ENCODE measurements at regions of chr6 and their contacts with region 1.

Region 1: GRCh38 chr6:37819177-37819823 is at the start of gene ZFAND3:
- DNase-seq: peak; percentile 99
- ATAC-seq: peak; percentile 79
- H3K4me3 ChIP-seq: peak within 1 kb of the TSS; percentile 72 to 100 (median 89)
- H3K4me3 Mint-ChIP-seq: peak within 1 kb of the TSS; percentile 92
- H3K27ac ChIP-seq: peak within 1 kb of the TSS; percentile 90 to 96
- H3K27ac Mint-ChIP-seq: peak within 1 kb of the TSS; percentile 98
- H3K4me1 ChIP-seq: peaks cover 18 to 26% of the 10 kb centered on the region in 2 donors
- H3K4me1 Mint-ChIP-seq: peaks cover 43% of the 10 kb centered on the region
- H3K27me3 ChIP-seq: no peaks in the 10 kb centered on the region
- H3K27me3 Mint-ChIP-seq: no peaks in the 10 kb centered on the region
- CTCF ChIP-seq: no peak
- total RNA-seq, gene ZFAND3: 58.3 and 64.8 TPM in 2 replicates

Region 2: DNA sequence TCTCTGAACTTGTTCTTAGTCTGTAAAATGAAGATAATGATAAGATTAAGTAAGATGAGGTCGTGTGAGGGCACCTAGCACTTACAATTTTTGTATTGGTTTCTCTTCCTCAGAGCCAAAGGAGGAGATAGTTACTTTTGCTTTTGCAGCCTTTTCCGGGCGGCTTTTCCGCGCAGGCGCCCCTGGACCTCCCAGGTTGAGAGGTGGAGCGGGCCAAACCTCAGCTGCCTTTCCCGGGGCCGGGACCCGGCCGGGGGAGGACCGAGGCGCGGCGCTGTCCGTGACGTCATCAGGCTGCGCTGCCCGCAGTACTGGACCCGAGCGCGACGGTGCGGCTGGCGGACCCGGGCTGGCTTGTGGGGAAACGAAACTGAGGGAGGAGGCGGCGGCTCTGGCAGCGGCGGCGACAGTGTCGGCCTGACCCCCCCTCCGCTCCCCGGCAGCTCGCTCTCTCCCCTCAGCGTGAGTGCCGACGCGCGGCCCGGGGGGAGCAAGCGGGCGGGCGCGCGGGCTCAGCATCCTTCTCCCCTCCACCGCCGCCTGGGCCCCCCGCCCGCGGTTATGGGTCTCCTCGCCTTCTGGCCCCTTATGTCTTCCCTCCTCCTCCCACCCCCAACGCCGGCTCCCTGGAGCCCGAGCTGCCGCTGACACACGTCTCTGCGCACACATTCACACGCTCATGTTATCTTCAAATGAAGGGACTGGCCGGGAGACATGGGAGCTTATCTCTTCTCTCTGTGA is 386.2 kb before region 1 on chr6 and contains the start of gene CMTR1:
- CTCF ChIA-PET with region 1: no interaction called
- POLR2A ChIA-PET with region 1: no interaction called
- intact Hi-C with region 1: loop called (anchors 1 kb)
- DNase-seq: peak; percentile 98
- ATAC-seq: peak; percentile 88
- H3K4me3 ChIP-seq: peak within 1 kb of the TSS; percentile 88 to 97 (median 94)
- H3K4me3 Mint-ChIP-seq: peak within 1 kb of the TSS; percentile 96
- H3K27ac ChIP-seq: peak within 1 kb of the TSS; percentile 92 to 94
- H3K27ac Mint-ChIP-seq: peak within 1 kb of the TSS; percentile 96
- H3K4me1 ChIP-seq: peaks cover 17 to 26% of the 10 kb centered on the region in 2 donors
- H3K4me1 Mint-ChIP-seq: peaks cover 40% of the 10 kb centered on the region
- H3K27me3 ChIP-seq: no peaks in the 10 kb centered on the region
- H3K27me3 Mint-ChIP-seq: peaks cover under 1% of the 10 kb centered on the region
- CTCF ChIP-seq: no peak
- total RNA-seq, gene CMTR1: 81.3 and 82.9 TPM in 2 replicates

Region 3: GRCh38 chr6:37705239-37706051 is 113.9 kb before region 1 on chr6:
- CTCF ChIA-PET with region 1: interaction called, 3 read pairs
- POLR2A ChIA-PET with region 1: no interaction called
- intact Hi-C with region 1: loop called (anchors 2 kb)
- DNase-seq: peak; percentile 87
- ATAC-seq: peak; percentile 88
- H3K4me3 ChIP-seq: peak overlapping the region; percentile 3 to 69 (median 53)
- H3K4me3 Mint-ChIP-seq: peak overlapping the region; percentile 91
- H3K27ac ChIP-seq: peak overlapping the region; percentile 39 to 65
- H3K27ac Mint-ChIP-seq: peak overlapping the region; percentile 86
- H3K4me1 ChIP-seq: peaks cover 5 to 22% of the 10 kb centered on the region in 2 donors
- H3K4me1 Mint-ChIP-seq: peaks cover 26% of the 10 kb centered on the region
- H3K27me3 ChIP-seq: peaks cover 0 to 4% (median 0%) of the 10 kb centered on the region in 4 experiments
- H3K27me3 Mint-ChIP-seq: no peaks in the 10 kb centered on the region
- CTCF ChIP-seq: peak; percentile 83

Region 4: GRCh38 chr6:37868447-37868825 is 49.1 kb after region 1 on chr6:
- CTCF ChIA-PET with region 1: no interaction called
- POLR2A ChIA-PET with region 1: interaction called, 12 read pairs
- intact Hi-C with region 1: no loop called
- DNase-seq: no peak
- ATAC-seq: no peak
- H3K4me3 ChIP-seq: peak overlapping the region in 1 of 5 experiments; percentile 47
- H3K4me3 Mint-ChIP-seq: peak overlapping the region; percentile 65
- H3K27ac ChIP-seq: peak overlapping the region in 1 of 2 donors; percentile 61
- H3K27ac Mint-ChIP-seq: peak overlapping the region; percentile 60
- H3K4me1 ChIP-seq: peaks cover 22 to 34% of the 10 kb centered on the region in 2 donors
- H3K4me1 Mint-ChIP-seq: peaks cover 63% of the 10 kb centered on the region
- H3K27me3 ChIP-seq: no peaks in the 10 kb centered on the region
- H3K27me3 Mint-ChIP-seq: no peaks in the 10 kb centered on the region
- CTCF ChIP-seq: no peak

Region 5: DNA sequence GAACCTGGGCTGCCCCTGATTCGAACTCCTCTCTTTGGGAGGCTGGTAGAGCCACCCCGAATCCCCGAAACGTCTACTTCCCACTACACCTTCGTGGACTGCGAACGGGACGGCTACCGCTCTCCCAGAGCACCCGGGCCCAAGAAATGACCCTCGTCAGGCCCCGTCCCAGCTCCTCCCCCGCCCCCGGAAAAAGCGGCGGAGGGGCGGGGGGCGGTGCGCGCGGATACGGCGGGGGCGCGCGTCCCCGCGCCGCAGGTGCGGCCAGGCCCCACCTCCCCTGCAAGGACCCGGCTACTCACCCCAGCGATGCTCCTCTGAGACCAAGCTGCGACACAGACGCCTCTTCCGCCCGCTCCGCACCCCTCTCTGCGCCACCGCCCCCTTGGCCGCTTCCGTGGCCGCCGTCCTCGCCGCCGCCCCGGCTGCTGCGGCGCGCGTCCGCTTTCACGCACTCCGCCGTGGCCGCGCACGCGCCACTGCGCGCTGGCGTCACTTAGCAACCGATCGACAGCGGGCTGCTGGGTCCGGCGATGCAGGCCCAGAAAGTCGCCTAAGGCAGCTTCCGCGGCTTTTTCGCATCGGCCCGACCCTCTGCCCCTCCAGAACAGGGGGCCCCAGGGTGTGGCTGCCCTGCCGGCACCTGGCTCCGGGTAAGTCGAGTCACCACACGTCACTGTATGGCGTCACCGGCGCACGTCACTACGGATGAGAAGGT is 820.4 kb after region 1 on chr6 and contains the start of gene BTBD9:
- CTCF ChIA-PET with region 1: no interaction called
- POLR2A ChIA-PET with region 1: no interaction called
- intact Hi-C with region 1: loop called (anchors 2 kb)
- DNase-seq: peak; percentile 95
- ATAC-seq: peak; percentile 88
- H3K4me3 ChIP-seq: peak within 1 kb of the TSS; percentile 83 to 95 (median 88)
- H3K4me3 Mint-ChIP-seq: peak within 1 kb of the TSS; percentile 81
- H3K27ac ChIP-seq: peak within 1 kb of the TSS; percentile 92 to 99
- H3K27ac Mint-ChIP-seq: peak within 1 kb of the TSS; percentile 89
- H3K4me1 ChIP-seq: peaks cover 18% of the 10 kb centered on the region in 2 donors
- H3K4me1 Mint-ChIP-seq: peaks cover 42% of the 10 kb centered on the region
- H3K27me3 ChIP-seq: no peaks in the 10 kb centered on the region
- H3K27me3 Mint-ChIP-seq: no peaks in the 10 kb centered on the region
- CTCF ChIP-seq: no peak
- total RNA-seq, gene BTBD9: 48.9 and 57.8 TPM in 2 replicates

Measured in B cell (primary cell).